MCF 10A (cell line): ENCODE measurements at regions of chr18 and their contacts with region 1.

Region 1: GRCh38 chr18:13216092-13216582 is 2.4 kb upstream of the LDLRAD4 start:
- DNase-seq: peak; percentile 38
- H3K4me3 Mint-ChIP-seq: peak overlapping the region; percentile 55
- H3K27ac Mint-ChIP-seq: no peak overlapping the region
- H3K4me1 Mint-ChIP-seq: no peaks in the 10 kb centered on the region
- H3K27me3 Mint-ChIP-seq: peaks cover 69% of the 10 kb centered on the region
- CTCF ChIP-seq: peak; percentile 37

Region 2: GRCh38 chr18:12531749-12532148 is 684.4 kb before region 1 on chr18:
- CTCF ChIA-PET with region 1: no interaction called
- POLR2A ChIA-PET with region 1: no interaction called
- intact Hi-C with region 1: no loop called
- DNase-seq: peak; percentile 30
- H3K4me3 Mint-ChIP-seq: no peak overlapping the region
- H3K27ac Mint-ChIP-seq: no peak overlapping the region
- H3K4me1 Mint-ChIP-seq: peaks cover 12% of the 10 kb centered on the region
- H3K27me3 Mint-ChIP-seq: no peaks in the 10 kb centered on the region
- CTCF ChIP-seq: no peak

Region 3: DNA sequence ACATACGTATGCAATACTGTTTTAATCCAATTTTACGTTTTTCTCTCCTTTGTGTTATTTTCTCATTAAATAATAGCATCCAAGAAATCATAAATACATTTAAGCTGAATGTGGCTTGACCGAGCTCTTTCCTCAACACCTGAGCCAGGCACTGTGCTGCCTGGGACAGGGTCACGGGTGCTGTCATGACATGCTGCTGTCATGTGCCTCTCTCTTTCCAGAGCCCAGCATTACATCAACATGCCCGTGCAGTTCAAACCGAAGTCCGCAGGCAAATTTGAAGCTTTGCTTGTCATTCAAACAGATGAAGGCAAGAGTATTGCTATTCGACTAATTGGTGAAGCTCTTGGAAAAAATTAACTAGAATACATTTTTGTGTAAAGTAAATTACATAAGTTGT is 91.7 kb before region 1 on chr18:
- CTCF ChIA-PET with region 1: no interaction called
- POLR2A ChIA-PET with region 1: no interaction called
- intact Hi-C with region 1: no loop called
- DNase-seq: no peak
- H3K4me3 Mint-ChIP-seq: no peak overlapping the region
- H3K27ac Mint-ChIP-seq: no peak overlapping the region
- H3K4me1 Mint-ChIP-seq: no peaks in the 10 kb centered on the region
- H3K27me3 Mint-ChIP-seq: no peaks in the 10 kb centered on the region
- CTCF ChIP-seq: no peak

Region 4: GRCh38 chr18:13530879-13531387 is 314.8 kb after region 1 on chr18:
- CTCF ChIA-PET with region 1: interaction called, 41 read pairs
- POLR2A ChIA-PET with region 1: no interaction called
- intact Hi-C with region 1: loop called (anchors 1 kb)
- DNase-seq: peak; percentile 15
- H3K4me3 Mint-ChIP-seq: no peak overlapping the region
- H3K27ac Mint-ChIP-seq: no peak overlapping the region
- H3K4me1 Mint-ChIP-seq: no peaks in the 10 kb centered on the region
- H3K27me3 Mint-ChIP-seq: no peaks in the 10 kb centered on the region
- CTCF ChIP-seq: no peak

Region 5: GRCh38 chr18:13611601-13612195 is 395.6 kb after region 1 on chr18:
- CTCF ChIA-PET with region 1: interaction called, 3 read pairs
- POLR2A ChIA-PET with region 1: no interaction called
- intact Hi-C with region 1: loop called (anchors 10 kb)
- DNase-seq: no peak
- H3K4me3 Mint-ChIP-seq: peak overlapping the region; percentile 30
- H3K27ac Mint-ChIP-seq: no peak overlapping the region
- H3K4me1 Mint-ChIP-seq: peaks cover 6% of the 10 kb centered on the region
- H3K27me3 Mint-ChIP-seq: peaks cover 42% of the 10 kb centered on the region
- CTCF ChIP-seq: no peak